Right cardiac atrium (tissue), 5 donors: ENCODE measurements at regions of chr5 and their contacts with region 1.

Region 1: DNA sequence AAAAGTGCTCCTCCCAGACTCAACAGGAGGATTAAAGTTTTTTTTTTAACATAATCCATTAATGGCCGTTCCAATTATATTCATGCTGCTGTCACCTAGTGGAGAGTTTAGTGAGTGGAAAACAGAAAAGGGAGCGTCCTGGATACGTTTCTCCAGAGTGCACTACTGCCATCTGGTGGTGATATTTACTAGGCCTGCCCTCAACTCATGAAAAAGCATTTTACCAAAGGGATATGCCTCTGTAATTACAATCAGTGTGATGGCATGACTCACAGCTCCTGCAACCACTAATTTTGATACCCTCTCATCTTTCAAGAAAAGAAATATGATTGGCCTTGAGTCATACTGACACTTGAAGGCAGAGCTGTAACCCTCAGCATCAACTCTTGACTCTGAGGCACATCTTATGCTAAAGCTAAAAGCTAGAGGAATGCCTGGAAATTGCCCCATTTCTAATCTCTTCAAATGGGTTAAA is 20.0 kb downstream of the MINAR2 start:
- DNase-seq: peak in 2 of 3 donors; percentile 26 to 48
- ATAC-seq: peak; percentile 90 to 92
- H3K4me3 ChIP-seq: no peak overlapping the region
- H3K27ac ChIP-seq: no peak overlapping the region
- H3K4me1 ChIP-seq: no peaks in the 10 kb centered on the region
- H3K27me3 ChIP-seq: no peaks in the 10 kb centered on the region

Region 2: GRCh38 chr5:129172580-129172979 is 595.4 kb before region 1 on chr5:
- intact Hi-C with region 1: loop called in 3 of 4 experiments (anchors 5 to 10 kb)
- DNase-seq: no peak
- ATAC-seq: peak in 1 of 2 donors; percentile 77
- H3K4me3 ChIP-seq: no peak overlapping the region
- H3K27ac ChIP-seq: no peak overlapping the region
- H3K4me1 ChIP-seq: no peaks in the 10 kb centered on the region
- H3K27me3 ChIP-seq: no peaks in the 10 kb centered on the region

Region 3: DNA sequence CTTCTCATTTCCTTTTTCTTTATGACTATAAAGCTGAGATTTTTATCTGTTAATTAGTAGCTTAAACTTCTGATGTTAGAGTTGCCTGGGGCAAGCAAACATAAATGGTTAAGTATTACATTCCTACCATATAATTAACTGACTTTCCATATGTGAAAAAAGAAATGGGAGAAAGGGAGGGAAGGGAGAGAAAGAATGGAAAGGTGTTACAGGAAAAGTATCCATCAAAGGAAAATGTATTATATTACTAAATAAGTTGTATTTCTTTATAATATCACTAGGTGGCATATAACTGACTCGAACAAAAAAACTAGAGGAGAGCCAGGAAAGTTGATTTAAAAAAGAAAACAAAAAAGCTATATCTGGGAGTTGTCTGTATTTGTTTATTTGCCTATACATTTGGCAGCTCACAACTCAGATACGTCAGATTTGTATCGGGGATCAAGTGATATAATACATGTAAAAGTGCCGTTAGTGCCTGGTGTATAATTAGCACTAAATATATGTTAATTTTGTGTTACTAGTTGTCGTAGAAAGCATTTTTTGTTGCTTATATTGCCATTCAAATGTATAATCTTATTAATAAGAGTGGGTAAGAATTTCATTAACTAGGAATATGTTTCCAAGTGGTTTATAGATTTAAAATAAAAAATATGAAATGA is 367.5 kb before region 1 on chr5:
- intact Hi-C with region 1: loop called in 1 of 4 experiments (anchors 10 kb)
- DNase-seq: no peak
- ATAC-seq: no peak
- H3K4me3 ChIP-seq: peak overlapping the region; percentile 18
- H3K27ac ChIP-seq: no peak overlapping the region
- H3K4me1 ChIP-seq: no peaks in the 10 kb centered on the region
- H3K27me3 ChIP-seq: no peaks in the 10 kb centered on the region

Region 4: GRCh38 chr5:129852747-129853352 is 84.9 kb after region 1 on chr5:
- intact Hi-C with region 1: loop called in 2 of 4 experiments (anchors 5 kb)
- DNase-seq: peak; percentile 81 to 91 (median 87)
- ATAC-seq: peak; percentile 79 to 84
- H3K4me3 ChIP-seq: no peak overlapping the region
- H3K27ac ChIP-seq: no peak overlapping the region
- H3K4me1 ChIP-seq: no peaks in the 10 kb centered on the region
- H3K27me3 ChIP-seq: no peaks in the 10 kb centered on the region

Region 5: GRCh38 chr5:131109540-131110255 is 1341.8 kb after region 1 on chr5:
- intact Hi-C with region 1: loop called in 1 of 4 experiments (anchors 10 kb)
- DNase-seq: no peak
- ATAC-seq: peak; percentile 64
- H3K4me3 ChIP-seq: no peak overlapping the region
- H3K27ac ChIP-seq: no peak overlapping the region
- H3K4me1 ChIP-seq: no peaks in the 10 kb centered on the region
- H3K27me3 ChIP-seq: no peaks in the 10 kb centered on the region